ENCODE measurements at regions of chr1 and their contacts with region 1.

Region 1: GRCh38 chr1:186082235-186082937 is 292.7 kb downstream of the TPR start:
- DNase-seq: no peak
- H3K4me3 Mint-ChIP-seq: no peak overlapping the region
- H3K27ac Mint-ChIP-seq: no peak overlapping the region
- H3K4me1 Mint-ChIP-seq: no peaks in the 10 kb centered on the region
- H3K27me3 Mint-ChIP-seq: peaks cover 14% of the 10 kb centered on the region

Region 2: DNA sequence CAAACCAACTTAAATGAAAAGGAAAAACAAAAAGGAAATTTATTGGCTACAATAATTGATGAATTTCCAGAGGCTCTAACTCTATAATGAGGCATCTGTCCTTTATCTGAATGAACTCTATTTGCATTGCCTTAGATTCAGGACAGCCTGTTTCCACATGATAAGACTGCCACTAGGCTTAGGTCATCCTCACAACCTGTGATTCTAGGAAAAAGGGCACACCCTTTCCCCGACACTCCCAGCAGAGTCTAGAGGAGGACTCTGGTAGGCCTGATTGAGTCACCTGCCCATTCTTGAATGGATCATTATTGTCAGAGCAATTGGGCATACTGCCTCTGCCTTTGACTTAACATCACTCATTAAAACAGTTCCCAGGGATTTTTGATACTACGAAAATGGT is 29.9 kb after region 1 on chr1:
- intact Hi-C with region 1: loop called (anchors 1 kb)
- DNase-seq: no peak
- H3K4me3 Mint-ChIP-seq: no peak overlapping the region
- H3K27ac Mint-ChIP-seq: no peak overlapping the region
- H3K4me1 Mint-ChIP-seq: no peaks in the 10 kb centered on the region
- H3K27me3 Mint-ChIP-seq: peaks cover 4% of the 10 kb centered on the region

Measured in activated T-helper 1 cell treated with anti-CD3 and anti-CD28 coated beads, Interleukin-12 subunit alpha, Interleukin-12 subunit beta, Interleukin-2, Interleukin-4 antibody, amounts not matched to agents 30 ng/mL and 10 ng/mL and 1 ng/mL, durations not matched to agents 14 hours and 24 hours and 36 hours (primary cell).